Thyroid gland (tissue), 4 donors: ENCODE measurements at regions of chr4 and their contacts with region 1.

Region 1: DNA sequence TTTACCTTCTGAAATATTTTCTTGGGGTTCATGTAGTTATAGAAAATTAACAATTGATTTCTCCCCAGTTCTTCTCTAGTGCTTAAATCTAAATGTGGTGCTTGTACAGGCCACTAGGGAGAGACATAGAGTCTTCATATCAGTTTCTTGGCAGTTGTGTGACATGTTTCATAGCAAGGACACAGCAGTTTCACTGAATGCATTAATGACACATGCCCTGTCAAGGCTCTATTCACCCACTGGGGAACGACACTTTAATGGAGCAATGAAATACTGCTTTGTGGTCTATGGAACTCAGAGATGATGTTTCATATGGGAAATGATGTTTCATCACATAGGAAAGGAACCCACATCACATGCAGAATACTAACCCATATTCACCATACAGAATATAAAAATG is 2.8 kb downstream of the VEGFC start:
- DNase-seq: peak in 1 of 2 donors; percentile 9
- H3K4me3 ChIP-seq: peak overlapping the region in 1 of 3 donors; percentile 79
- H3K27ac ChIP-seq: peak overlapping the region in 2 of 3 donors; percentile 72 to 99
- H3K4me1 ChIP-seq: peaks cover 37 to 42% of the 10 kb centered on the region in 2 donors
- H3K27me3 ChIP-seq: no peaks in the 10 kb centered on the region
- CTCF ChIP-seq: peak; percentile 39 to 91 (median 68)
- POLR2A ChIP-seq: no peak

Region 2: GRCh38 chr4:176383273-176384077 is 406.5 kb before region 1 on chr4:
- intact Hi-C with region 1: loop called (anchors 5 kb)
- DNase-seq: no peak
- H3K4me3 ChIP-seq: no peak overlapping the region
- H3K27ac ChIP-seq: no peak overlapping the region
- H3K4me1 ChIP-seq: peaks cover 4 to 7% of the 10 kb centered on the region in 2 donors
- H3K27me3 ChIP-seq: no peaks in the 10 kb centered on the region
- CTCF ChIP-seq: no peak
- POLR2A ChIP-seq: no peak

Region 3: GRCh38 chr4:176949029-176949428 is 159.1 kb after region 1 on chr4:
- intact Hi-C with region 1: no loop called
- DNase-seq: no peak
- H3K4me3 ChIP-seq: no peak overlapping the region
- H3K27ac ChIP-seq: no peak overlapping the region
- H3K4me1 ChIP-seq: no peaks in the 10 kb centered on the region
- H3K27me3 ChIP-seq: no peaks in the 10 kb centered on the region
- CTCF ChIP-seq: no peak
- POLR2A ChIP-seq: no peak